ENCODE measurements at regions of chr1 and their contacts with region 1.

Region 1: GRCh38 chr1:101238681-101239094 is 1.9 kb downstream of the S1PR1 start:
- DNase-seq: peak; percentile 92
- ATAC-seq: peak; percentile 53
- H3K4me3 Mint-ChIP-seq: peak overlapping the region; percentile 98
- H3K27ac Mint-ChIP-seq: peak overlapping the region; percentile 95
- H3K4me1 Mint-ChIP-seq: peaks cover 69% of the 10 kb centered on the region
- H3K27me3 Mint-ChIP-seq: no peaks in the 10 kb centered on the region

Region 2: GRCh38 chr1:100950781-100951180 is 287.9 kb before region 1 on chr1:
- CTCF ChIA-PET with region 1: interaction called, 13 read pairs
- POLR2A ChIA-PET with region 1: interaction called, 6 read pairs
- DNase-seq: no peak
- ATAC-seq: no peak
- H3K4me3 Mint-ChIP-seq: no peak overlapping the region
- H3K27ac Mint-ChIP-seq: peak overlapping the region; percentile 40
- H3K4me1 Mint-ChIP-seq: peaks cover 64% of the 10 kb centered on the region
- H3K27me3 Mint-ChIP-seq: no peaks in the 10 kb centered on the region

Region 3: GRCh38 chr1:101112051-101112780 is 126.5 kb before region 1 on chr1:
- CTCF ChIA-PET with region 1: interaction called, 16 read pairs
- POLR2A ChIA-PET with region 1: interaction called, 15 read pairs
- DNase-seq: peak; percentile 82
- ATAC-seq: peak; percentile 99
- H3K4me3 Mint-ChIP-seq: peak overlapping the region; percentile 27
- H3K27ac Mint-ChIP-seq: peak overlapping the region; percentile 95
- H3K4me1 Mint-ChIP-seq: peaks cover 67% of the 10 kb centered on the region
- H3K27me3 Mint-ChIP-seq: no peaks in the 10 kb centered on the region

Region 4: DNA sequence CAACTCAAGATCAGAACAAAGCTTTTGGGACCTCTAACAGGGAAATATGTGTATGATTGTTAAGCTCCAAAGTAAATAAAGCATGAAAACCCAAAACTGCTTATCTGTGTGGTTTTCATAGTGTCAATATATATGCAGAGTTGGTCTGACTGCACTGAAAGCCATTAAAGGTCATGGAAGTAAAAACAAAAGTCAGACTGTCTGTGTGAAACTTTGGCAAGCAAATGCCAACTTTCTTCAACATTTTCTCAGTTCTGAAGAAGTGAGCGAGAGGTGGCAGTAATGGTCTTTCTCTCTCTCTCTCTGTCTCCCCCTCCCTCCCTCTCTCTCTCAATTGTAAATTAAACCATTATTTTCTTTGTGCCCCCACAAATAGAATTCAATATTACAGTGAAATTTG is 101.9 kb before region 1 on chr1:
- CTCF ChIA-PET with region 1: interaction called, 165 read pairs
- POLR2A ChIA-PET with region 1: interaction called, 63 read pairs
- DNase-seq: peak; percentile 56
- ATAC-seq: peak; percentile 73
- H3K4me3 Mint-ChIP-seq: peak overlapping the region; percentile 42
- H3K27ac Mint-ChIP-seq: peak overlapping the region; percentile 83
- H3K4me1 Mint-ChIP-seq: peaks cover 67% of the 10 kb centered on the region
- H3K27me3 Mint-ChIP-seq: no peaks in the 10 kb centered on the region

Region 5: DNA sequence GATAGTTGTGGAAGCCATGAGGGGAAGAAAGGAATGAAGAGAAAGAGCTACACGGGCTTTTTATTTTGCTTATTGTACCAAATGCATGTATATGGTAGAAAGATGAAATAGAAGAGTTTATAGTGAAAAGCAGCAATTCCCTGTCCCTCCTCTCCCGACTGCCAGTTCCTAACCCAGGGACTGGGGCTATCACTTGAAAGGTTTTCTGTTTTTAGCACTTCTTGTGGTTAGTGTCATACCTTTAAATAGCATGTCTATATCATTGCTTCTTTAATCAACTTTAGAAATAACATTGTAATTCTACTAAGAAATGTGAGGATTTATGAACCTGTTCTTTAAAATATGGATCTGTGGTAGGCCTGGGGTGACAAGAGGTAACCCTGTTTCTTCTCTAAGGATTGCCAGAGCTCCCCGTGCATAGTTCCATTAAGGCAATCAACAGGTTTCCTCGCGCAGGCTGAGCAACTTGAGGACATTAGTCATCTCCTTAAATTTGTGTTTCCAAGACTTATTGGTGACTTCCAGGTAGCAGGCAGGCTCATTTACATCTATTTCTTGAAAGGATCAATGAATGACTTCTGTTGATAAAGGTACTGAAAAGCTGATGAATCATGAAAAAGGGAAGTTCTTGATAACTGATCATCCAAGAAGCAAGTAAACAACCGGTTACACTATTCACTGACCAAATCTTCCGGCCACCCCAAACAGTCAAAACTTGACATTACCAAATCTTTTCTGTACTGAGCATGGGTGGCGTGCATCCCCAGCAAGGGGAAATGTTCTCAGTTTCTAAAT is 39.6 kb before region 1 on chr1:
- CTCF ChIA-PET with region 1: interaction called, 14 read pairs
- POLR2A ChIA-PET with region 1: interaction called, 29 read pairs
- DNase-seq: peak; percentile 44
- ATAC-seq: no peak
- H3K4me3 Mint-ChIP-seq: no peak overlapping the region
- H3K27ac Mint-ChIP-seq: peak overlapping the region; percentile 41
- H3K4me1 Mint-ChIP-seq: peaks cover 12% of the 10 kb centered on the region
- H3K27me3 Mint-ChIP-seq: no peaks in the 10 kb centered on the region